ENCODE measurements at regions of chr2 and their contacts with region 1.

Region 1: GRCh38 chr2:70616168-70616694 is 62.6 kb upstream of the TGFA start:
- DNase-seq: no peak
- ATAC-seq: peak in 2 of 4 donors; percentile 30 to 44
- H3K4me3 ChIP-seq: no peak overlapping the region
- H3K27ac ChIP-seq: no peak overlapping the region
- H3K4me1 ChIP-seq: no peaks in the 10 kb centered on the region
- H3K27me3 ChIP-seq: no peaks in the 10 kb centered on the region
- CTCF ChIP-seq: no peak
- POLR2A ChIP-seq: no peak

Region 2: DNA sequence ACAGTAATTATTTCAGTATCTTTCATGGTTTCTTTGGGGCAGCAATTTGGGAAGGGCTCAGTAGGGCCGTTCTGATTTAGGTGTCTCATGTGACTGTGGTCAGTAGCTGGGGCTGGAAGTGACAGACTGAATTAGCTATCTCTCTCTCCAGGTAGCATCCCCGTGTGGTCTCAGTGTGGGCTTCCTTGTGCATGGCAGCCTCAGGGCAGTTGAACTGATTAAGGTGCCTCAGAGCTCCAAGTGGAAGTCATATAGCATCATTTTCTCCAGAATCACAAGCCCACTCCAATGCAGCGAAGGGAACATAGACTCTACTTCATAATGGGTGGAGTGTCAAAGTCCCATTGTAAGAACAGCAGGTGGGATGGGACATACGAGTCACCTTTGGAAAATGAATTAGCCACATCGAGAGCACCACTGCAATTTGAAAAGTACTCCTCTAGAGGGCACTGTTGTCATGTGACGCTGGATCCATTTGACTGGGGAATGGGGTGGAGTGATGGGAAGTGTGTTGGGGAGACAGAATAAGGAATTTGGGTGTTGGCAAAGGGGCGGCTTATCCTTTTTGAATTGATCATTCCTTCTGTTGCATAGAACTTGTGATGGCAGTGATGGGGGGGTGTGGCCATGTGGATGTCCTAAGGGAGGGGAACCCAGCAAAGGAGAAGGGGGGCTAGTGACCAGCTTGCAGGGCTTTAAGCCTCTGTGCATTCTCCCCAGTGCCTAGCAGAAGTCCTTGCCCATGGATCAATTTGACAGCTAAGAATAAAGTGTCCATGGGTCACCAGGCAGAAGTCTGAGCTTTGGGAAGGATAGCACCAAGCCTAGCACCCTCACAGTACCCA is 275.1 kb before region 1 on chr2:
- intact Hi-C with region 1: loop called (anchors 10 kb)
- DNase-seq: no peak
- ATAC-seq: peak; percentile 81 to 92 (median 88)
- H3K4me3 ChIP-seq: no peak overlapping the region
- H3K27ac ChIP-seq: no peak overlapping the region
- H3K4me1 ChIP-seq: no peaks in the 10 kb centered on the region
- H3K27me3 ChIP-seq: no peaks in the 10 kb centered on the region
- CTCF ChIP-seq: peak; percentile 81 to 84 (median 82)
- POLR2A ChIP-seq: no peak

Region 3: DNA sequence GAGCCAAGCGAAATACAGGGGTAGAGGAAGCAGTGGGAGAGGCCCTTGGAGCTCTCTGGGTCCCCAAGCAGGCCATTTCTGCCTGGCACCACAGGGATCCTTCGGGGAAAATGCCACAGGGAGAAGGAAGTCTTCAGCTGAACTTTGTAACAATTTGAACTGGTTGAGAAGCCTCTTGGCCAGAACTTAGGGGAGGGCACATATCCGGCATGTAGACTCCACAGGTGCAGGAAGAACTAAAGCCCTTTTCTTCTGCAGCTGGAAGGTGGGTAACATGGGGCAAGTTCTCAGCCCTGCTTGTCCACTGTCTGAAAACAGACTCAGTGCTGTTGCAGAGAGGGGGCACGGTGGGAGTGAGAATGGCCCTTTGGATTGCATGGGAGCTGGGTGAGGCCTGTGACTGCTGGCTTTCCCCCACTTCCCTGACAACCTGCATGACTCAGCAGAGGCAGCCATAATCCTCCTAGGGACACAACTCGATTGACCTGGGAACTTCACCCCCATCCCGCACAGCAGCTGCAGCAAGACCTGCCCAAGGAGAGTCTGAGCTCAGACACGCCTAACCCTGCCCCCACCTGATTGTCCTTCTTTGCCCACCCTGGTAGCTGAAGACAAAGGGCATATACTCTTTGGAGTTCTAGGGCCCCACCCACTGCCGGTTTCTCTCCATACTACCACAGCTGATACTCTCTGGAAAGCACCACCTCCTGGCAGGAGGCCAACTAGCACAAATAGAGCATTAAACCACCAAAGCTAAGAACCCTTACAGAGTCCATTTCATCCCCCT is 212.8 kb before region 1 on chr2:
- intact Hi-C with region 1: no loop called
- DNase-seq: no peak
- ATAC-seq: no peak
- H3K4me3 ChIP-seq: no peak overlapping the region
- H3K27ac ChIP-seq: no peak overlapping the region
- H3K4me1 ChIP-seq: no peaks in the 10 kb centered on the region
- H3K27me3 ChIP-seq: no peaks in the 10 kb centered on the region
- CTCF ChIP-seq: no peak
- POLR2A ChIP-seq: no peak

Region 4: DNA sequence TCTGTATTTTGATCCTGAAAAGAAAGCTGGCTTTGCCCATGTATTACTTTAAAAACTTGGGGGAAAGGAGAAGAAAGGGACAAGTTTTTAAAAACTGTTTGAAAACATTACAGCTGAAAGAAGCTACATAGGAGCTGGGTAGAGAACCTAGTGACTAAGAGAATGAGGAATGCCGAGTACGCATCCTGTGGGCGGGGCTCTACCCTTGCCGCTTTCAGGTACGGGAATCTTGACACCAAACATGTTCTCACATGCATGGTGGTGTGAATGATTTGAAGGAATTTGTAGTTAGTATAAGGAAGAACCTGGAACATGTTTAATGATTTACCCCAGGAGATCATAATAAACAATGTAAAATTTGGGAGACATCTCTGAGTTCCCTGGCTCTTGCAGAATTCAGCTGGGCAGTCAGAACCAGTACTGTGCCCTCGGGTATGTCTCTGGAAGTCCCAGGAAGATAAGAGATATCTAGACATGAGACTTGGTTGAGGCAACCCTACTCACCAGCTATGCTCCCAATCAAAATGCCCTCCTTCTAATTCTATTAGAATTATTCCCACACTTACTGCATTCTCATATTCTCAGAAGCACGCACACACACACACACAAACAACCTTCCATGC is 46.1 kb before region 1 on chr2:
- intact Hi-C with region 1: no loop called
- DNase-seq: no peak
- ATAC-seq: no peak
- H3K4me3 ChIP-seq: no peak overlapping the region
- H3K27ac ChIP-seq: no peak overlapping the region
- H3K4me1 ChIP-seq: no peaks in the 10 kb centered on the region
- H3K27me3 ChIP-seq: no peaks in the 10 kb centered on the region
- CTCF ChIP-seq: no peak
- POLR2A ChIP-seq: no peak

Region 5: GRCh38 chr2:71452565-71452964 is 836.3 kb after region 1 on chr2:
- intact Hi-C with region 1: no loop called
- DNase-seq: peak in 2 of 3 donors; percentile 62 to 72
- ATAC-seq: peak; percentile 3 to 59 (median 8)
- H3K4me3 ChIP-seq: no peak overlapping the region
- H3K27ac ChIP-seq: peak overlapping the region in 1 of 3 donors; percentile 60
- H3K4me1 ChIP-seq: peaks cover 0 to 44% (median 15%) of the 10 kb centered on the region in 4 donors
- H3K27me3 ChIP-seq: no peaks in the 10 kb centered on the region
- CTCF ChIP-seq: peak in 2 of 4 donors; percentile 14 to 22
- POLR2A ChIP-seq: no peak

Measured in right lobe of liver (tissue), 6 donors.